ENCODE measurements at regions of chr1 and their contacts with region 1.

Region 1: GRCh38 chr1:170967042-170967910 is 31.9 kb downstream of the MROH9 start:
- DNase-seq: peak in 2 of 9 donors; percentile 7 to 19
- ATAC-seq: no peak
- H3K4me3 ChIP-seq: no peak overlapping the region
- H3K4me3 Mint-ChIP-seq: no peak overlapping the region
- H3K27ac ChIP-seq: no peak overlapping the region
- H3K27ac Mint-ChIP-seq: no peak overlapping the region
- H3K4me1 ChIP-seq: no peaks in the 10 kb centered on the region
- H3K4me1 Mint-ChIP-seq: no peaks in the 10 kb centered on the region
- H3K27me3 ChIP-seq: no peaks in the 10 kb centered on the region
- H3K27me3 Mint-ChIP-seq: peaks cover 9 to 49% (median 25%) of the 10 kb centered on the region in 5 donors

Region 2: GRCh38 chr1:169711469-169712281 is 1255.6 kb before region 1 on chr1 and contains the start of gene SELL:
- CTCF ChIA-PET with region 1: no interaction called
- POLR2A ChIA-PET with region 1: no interaction called
- intact Hi-C with region 1: no loop called
- DNase-seq: peak; percentile 21 to 83 (median 76)
- ATAC-seq: peak; percentile 91
- H3K4me3 ChIP-seq: peak within 1 kb of the TSS; percentile 62
- H3K4me3 Mint-ChIP-seq: peak within 1 kb of the TSS in 9 of 10 donors; percentile 90 to 99 (median 97)
- H3K27ac ChIP-seq: peak within 1 kb of the TSS; percentile 70
- H3K27ac Mint-ChIP-seq: peak within 1 kb of the TSS in 8 of 9 donors; percentile 85 to 98 (median 94)
- H3K4me1 ChIP-seq: peaks cover 3 to 7% of the 10 kb centered on the region in 2 donors
- H3K4me1 Mint-ChIP-seq: peaks cover 6 to 32% (median 20%) of the 10 kb centered on the region in 7 donors
- H3K27me3 ChIP-seq: no peaks in the 10 kb centered on the region
- H3K27me3 Mint-ChIP-seq: peaks cover 0 to 30% (median 0%) of the 10 kb centered on the region in 5 donors
- total RNA-seq, gene SELL: 303 to 633 (median 519) TPM

Region 3: GRCh38 chr1:171850651-171851350 is 883.5 kb after region 1 on chr1:
- CTCF ChIA-PET with region 1: no interaction called
- POLR2A ChIA-PET with region 1: no interaction called
- intact Hi-C with region 1: loop called in 1 of 2 experiments (anchors 5 kb)
- DNase-seq: no peak
- ATAC-seq: no peak
- H3K4me3 ChIP-seq: no peak overlapping the region
- H3K4me3 Mint-ChIP-seq: no peak overlapping the region
- H3K27ac ChIP-seq: no peak overlapping the region
- H3K27ac Mint-ChIP-seq: no peak overlapping the region
- H3K4me1 ChIP-seq: no peaks in the 10 kb centered on the region
- H3K4me1 Mint-ChIP-seq: no peaks in the 10 kb centered on the region
- H3K27me3 ChIP-seq: no peaks in the 10 kb centered on the region
- H3K27me3 Mint-ChIP-seq: peaks cover 0 to 34% (median 0%) of the 10 kb centered on the region in 5 donors